ENCODE measurements at regions of chr1 and their contacts with region 1.

Region 1: DNA sequence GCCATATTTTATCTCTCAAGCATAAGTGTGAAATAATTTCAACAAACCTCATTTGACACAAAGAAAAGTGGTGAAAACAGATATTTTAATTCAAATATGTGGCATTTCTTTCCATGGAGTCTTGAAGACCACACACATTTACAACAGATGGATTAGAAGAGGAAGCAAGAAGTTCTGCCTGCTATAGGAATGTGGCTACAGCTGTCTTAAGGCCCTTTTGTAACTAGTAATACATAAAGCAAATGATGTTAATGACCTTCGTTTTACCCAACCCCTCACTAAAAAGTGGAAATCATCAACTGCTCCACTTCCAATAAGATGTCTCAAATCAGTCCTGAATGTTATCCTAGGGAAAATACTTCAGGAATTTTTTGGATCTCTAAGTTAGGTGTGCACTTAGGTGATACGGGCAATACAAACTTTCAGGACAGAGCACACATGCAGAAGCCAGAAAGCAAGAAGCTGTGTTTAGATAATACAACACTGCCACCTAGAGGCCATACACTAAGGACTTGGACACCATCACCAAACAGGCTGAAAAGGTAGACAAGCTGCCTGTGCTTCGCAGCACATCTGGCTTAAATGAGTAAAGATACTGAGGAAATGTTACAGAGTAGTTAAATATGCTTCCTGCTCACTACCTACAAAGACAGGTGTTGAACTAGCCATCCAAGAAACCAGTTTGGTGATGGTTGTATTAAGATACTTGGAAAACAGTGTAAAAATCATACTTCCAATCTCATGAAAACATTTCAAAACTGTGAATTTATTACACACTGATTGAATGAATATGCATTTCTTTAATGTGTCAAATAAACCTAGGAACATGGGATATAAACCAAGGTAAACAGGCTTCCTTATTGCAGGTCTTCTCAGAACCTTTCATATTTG is 24.4 kb downstream of the RRAGC start:
- DNase-seq: no peak
- ATAC-seq: peak; percentile 81

Region 2: DNA sequence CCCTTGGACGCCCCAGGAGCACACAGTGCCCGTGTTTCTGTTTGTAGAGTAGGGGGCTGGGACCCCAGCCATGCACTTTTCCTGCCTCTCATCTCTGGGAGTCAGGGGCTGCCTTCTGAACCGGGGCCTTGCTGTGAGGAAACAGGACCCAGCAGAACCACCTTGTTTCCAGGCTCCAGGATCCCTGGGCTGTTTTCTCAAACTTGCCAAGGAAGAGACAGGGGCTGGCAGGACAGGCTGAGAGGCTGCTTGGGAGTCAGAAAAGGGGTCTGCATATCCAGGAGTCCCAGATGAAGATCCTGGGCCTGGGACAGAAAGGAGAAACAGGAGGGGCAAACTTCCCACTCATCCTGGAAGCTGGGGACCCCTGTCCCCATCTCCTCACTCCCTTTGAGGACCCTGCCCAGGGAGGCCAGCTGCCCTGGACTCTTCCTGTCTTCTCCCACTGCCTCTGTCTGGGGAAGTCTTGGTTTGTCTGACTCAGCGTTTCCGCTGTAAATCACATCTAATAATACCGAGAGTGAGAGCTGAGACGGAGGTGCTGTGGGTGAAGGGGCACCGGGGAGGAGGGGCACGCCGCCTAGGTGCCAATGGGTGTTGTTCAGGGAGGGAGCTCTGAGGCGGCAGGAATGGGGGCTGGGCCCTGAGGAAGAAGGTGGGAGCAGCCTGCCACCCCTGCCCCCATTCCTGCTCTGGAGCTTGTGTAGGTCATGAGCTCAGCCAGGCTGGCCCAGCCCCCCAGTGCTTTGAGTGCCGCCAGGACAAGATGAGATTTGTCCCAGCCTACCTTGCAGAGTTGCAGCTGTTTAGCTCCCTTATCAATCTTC is 805.3 kb before region 1 on chr1:
- intact Hi-C with region 1: loop called (anchors 10 kb)
- DNase-seq: peak; percentile 58
- ATAC-seq: peak; percentile 73